MCF 10A (cell line): ENCODE measurements at regions of chr18 and their contacts with region 1.

Region 1: GRCh38 chr18:35290073-35290735 is at the start of gene ZSCAN30:
- DNase-seq: peak; percentile 94
- H3K4me3 Mint-ChIP-seq: peak within 1 kb of the TSS; percentile 97
- H3K27ac Mint-ChIP-seq: peak within 1 kb of the TSS; percentile 97
- H3K4me1 Mint-ChIP-seq: peaks cover 12% of the 10 kb centered on the region
- H3K27me3 Mint-ChIP-seq: no peaks in the 10 kb centered on the region
- CTCF ChIP-seq: no peak
- total RNA-seq, gene ZSCAN30: 20.5 and 30.1 TPM in 2 replicates

Region 2: DNA sequence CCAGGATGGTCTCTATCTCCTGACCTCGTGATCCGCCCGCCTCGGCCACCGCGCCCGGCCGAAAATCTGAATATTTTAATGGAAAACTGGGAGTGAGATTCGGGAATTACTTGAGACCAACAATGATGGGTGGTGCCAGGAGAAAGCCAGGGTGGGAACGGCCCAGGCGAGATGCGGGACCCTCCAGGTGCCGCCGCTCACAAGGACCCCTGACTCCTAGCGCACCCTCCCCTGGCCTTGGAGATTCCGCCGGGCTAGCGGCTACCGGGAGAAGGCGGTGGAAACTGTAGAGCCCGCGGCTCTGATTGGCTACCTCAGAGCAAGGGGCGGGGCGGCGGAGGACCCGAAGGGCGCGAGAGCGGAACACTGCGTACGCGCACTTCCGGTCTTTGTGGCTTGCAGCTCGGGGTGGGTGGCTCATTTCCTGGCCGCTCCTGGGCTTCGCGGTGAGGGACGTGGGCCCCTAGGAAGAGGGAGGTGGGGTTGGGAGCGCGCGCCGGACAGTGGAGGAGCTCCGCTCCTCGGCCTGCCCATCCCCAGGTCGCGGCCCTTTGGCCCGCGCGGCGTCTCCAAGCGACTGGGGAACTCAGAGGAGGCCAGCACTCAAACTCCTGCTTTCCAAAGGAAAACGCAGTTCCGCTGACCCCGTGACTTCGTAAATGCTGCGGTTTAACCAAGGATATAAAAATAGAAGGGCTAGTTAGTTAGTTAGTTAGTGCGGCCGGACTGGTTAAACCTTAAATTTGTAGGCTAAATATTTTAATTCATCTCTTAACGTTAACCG is 49.3 kb before region 1 on chr18 and contains the start of gene ZNF397:
- CTCF ChIA-PET with region 1: interaction called, 4 read pairs
- POLR2A ChIA-PET with region 1: interaction called, 58 read pairs
- intact Hi-C with region 1: loop called (anchors 1 kb)
- DNase-seq: peak; percentile 96
- H3K4me3 Mint-ChIP-seq: peak within 1 kb of the TSS; percentile 95
- H3K27ac Mint-ChIP-seq: peak within 1 kb of the TSS; percentile 97
- H3K4me1 Mint-ChIP-seq: no peaks in the 10 kb centered on the region
- H3K27me3 Mint-ChIP-seq: no peaks in the 10 kb centered on the region
- CTCF ChIP-seq: no peak
- total RNA-seq, gene ZNF397: 22.5 and 26.5 TPM in 2 replicates

Region 3: GRCh38 chr18:35311476-35311875 is 21.3 kb after region 1 on chr18:
- CTCF ChIA-PET with region 1: no interaction called
- POLR2A ChIA-PET with region 1: interaction called, 10 read pairs
- intact Hi-C with region 1: no loop called
- DNase-seq: peak; percentile 55
- H3K4me3 Mint-ChIP-seq: no peak overlapping the region
- H3K27ac Mint-ChIP-seq: peak overlapping the region; percentile 12
- H3K4me1 Mint-ChIP-seq: peaks cover 15% of the 10 kb centered on the region
- H3K27me3 Mint-ChIP-seq: no peaks in the 10 kb centered on the region
- CTCF ChIP-seq: no peak